ENCODE measurements at regions of chr3 and their contacts with region 1.

Region 1: DNA sequence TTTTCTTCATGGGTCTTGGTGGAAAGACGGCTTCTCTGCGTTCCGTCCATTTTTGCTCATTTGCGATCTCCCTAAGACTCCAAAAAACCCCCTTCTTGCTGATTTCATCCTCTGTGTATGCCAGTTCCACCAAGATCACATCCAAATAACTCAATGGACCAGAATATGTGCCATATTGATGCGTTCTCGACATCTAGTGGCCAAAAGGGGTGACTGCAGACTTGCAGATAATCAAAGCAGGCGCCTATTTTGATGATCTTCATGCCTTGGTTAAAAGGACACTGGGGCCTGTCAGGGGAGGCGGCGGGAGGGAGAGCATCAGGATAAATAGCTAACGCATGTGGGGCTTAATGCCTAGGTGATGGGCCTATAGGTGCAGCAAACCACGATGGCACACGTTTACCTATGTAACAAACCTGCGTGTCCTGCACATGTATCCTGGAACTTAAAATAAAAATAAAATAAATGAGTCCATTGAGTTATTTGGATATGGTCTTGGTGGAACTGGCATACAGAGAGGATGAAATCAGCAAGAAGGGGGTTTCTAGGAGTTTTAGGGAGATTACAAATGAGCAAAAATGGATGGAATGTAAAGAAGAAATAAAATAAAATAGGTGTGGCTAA is 104.2 kb upstream of the RAD18 start:
- DNase-seq: peak in 2 of 3 donors; percentile 31 to 77
- ATAC-seq: peak; percentile 71 to 72
- H3K4me3 ChIP-seq: no peak overlapping the region
- H3K27ac ChIP-seq: no peak overlapping the region
- H3K4me1 ChIP-seq: peaks cover 3% of the 10 kb centered on the region
- H3K27me3 ChIP-seq: no peaks in the 10 kb centered on the region

Region 2: DNA sequence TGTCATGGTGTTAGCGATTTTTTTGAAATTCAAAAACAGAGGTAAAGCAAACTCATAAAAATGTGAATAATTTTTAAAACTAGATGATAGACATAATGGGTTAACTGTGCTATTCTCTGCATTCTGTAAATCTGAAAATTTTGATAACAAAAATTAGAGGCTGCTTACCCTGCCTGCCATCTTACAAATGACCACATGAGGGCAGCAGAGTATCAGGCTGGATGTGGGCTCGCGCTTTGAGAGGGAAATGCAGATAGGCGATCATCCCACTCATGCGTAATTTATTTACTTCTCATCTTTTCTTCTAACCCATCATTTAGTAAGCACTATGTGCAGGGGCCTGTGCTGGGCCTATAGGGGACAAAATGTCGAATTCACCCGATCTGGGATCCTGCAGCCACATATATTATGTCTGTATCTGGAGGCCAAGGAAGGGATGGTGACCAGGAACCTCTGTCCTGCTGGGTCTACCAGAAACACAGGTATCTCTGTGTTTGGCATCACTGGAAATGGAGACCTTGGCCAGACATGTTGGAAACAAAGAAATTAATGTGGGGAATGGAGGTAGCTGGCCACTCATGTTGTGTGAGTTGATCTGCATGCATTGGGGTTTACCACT is 96.4 kb before region 1 on chr3:
- intact Hi-C with region 1: loop called in 2 of 4 experiments (anchors 5 kb)
- DNase-seq: peak in 2 of 3 donors; percentile 46 to 65
- ATAC-seq: peak; percentile 38 to 68
- H3K4me3 ChIP-seq: no peak overlapping the region
- H3K27ac ChIP-seq: no peak overlapping the region
- H3K4me1 ChIP-seq: no peaks in the 10 kb centered on the region
- H3K27me3 ChIP-seq: peaks cover 3% of the 10 kb centered on the region

Region 3: GRCh38 chr3:8987645-8988383 is 79.7 kb before region 1 on chr3:
- intact Hi-C with region 1: loop called in 3 of 4 experiments (anchors 2 to 5 kb)
- DNase-seq: peak; percentile 58 to 86 (median 77)
- ATAC-seq: peak; percentile 54 to 68
- H3K4me3 ChIP-seq: no peak overlapping the region
- H3K27ac ChIP-seq: no peak overlapping the region
- H3K4me1 ChIP-seq: no peaks in the 10 kb centered on the region
- H3K27me3 ChIP-seq: no peaks in the 10 kb centered on the region

Region 4: DNA sequence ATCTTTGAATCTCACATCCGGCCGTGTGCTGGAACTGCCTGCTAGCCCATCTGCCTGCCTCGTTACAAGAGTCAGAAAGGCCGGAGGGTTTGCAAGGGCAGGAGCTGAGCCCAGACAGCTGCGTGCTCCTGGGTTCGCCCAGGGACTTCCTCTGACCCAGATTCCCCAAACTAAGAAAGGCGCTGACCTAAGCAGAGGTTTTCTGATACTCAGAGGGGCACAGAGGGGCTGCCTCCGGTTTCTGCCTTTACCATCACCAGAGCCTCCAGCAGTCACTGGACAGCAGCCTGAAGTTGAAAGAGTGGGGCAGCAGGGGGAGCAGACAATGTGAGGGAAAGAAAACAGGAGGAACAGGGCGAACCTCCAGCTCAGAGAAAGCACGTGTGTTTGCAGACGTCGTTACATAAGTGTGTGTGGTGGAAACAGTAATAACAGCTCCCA is 70.8 kb before region 1 on chr3:
- intact Hi-C with region 1: loop called in 1 of 4 experiments (anchors 5 kb)
- DNase-seq: peak; percentile 49 to 79 (median 70)
- ATAC-seq: peak; percentile 73 to 86
- H3K4me3 ChIP-seq: no peak overlapping the region
- H3K27ac ChIP-seq: no peak overlapping the region
- H3K4me1 ChIP-seq: peaks cover 2% of the 10 kb centered on the region
- H3K27me3 ChIP-seq: no peaks in the 10 kb centered on the region

Region 5: GRCh38 chr3:9266716-9267115 is 199.3 kb after region 1 on chr3:
- intact Hi-C with region 1: no loop called
- DNase-seq: no peak
- ATAC-seq: no peak
- H3K4me3 ChIP-seq: no peak overlapping the region
- H3K27ac ChIP-seq: no peak overlapping the region
- H3K4me1 ChIP-seq: no peaks in the 10 kb centered on the region
- H3K27me3 ChIP-seq: no peaks in the 10 kb centered on the region

Region 6: GRCh38 chr3:9302425-9303181 is 235.1 kb after region 1 on chr3:
- intact Hi-C with region 1: loop called in 2 of 4 experiments (anchors 5 to 10 kb)
- DNase-seq: peak; percentile 81 to 91 (median 90)
- ATAC-seq: peak; percentile 94 to 95
- H3K4me3 ChIP-seq: no peak overlapping the region
- H3K27ac ChIP-seq: no peak overlapping the region
- H3K4me1 ChIP-seq: no peaks in the 10 kb centered on the region
- H3K27me3 ChIP-seq: no peaks in the 10 kb centered on the region